ENCODE measurements at regions of chr10 and their contacts with region 1.

Region 1: DNA sequence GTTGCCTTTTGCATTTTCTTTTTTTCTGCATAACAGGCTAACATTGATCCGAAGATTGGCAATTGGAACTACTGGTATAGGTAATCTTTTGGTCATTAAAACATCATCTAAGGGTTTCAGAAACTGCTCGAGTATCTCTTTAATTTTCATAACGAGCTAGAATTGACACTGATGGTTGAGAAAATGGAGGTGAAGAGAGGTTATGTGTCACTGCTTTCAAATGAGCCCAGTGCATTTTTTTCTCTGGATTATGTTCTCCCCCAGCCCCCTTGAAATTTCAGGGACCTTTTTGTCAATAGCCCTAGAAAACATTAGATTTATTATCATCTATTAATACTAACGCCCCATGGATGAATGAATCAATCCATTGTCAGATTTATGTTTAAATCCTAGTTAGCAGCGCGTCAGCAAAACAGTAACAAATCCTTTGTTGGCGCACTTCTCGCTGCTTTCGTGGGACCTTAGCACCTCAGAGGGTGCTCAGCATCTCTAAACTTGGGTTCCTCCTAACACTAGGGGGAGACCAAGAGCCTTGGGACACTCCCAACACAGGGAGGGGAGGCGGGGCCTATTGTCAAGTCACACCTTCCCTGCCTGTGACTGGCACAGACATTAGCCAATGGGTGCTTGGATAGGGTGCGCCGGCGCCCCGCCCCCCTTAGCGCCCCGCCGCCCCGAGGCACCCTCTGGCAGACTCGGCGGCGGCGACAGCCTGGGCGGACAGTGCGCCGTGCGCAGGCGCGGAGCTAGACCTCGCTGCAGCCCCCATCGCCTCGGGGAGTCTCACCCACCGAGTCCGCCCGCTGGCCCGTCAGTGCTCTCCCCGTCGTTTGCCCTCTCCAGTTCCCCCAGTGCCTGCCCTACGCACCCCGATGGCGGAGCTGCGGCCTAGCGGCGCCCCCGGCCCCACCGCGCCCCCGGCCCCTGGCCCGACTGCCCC is at the start of gene SUFU:
- H3K4me3 Mint-ChIP-seq: peak within 1 kb of the TSS; percentile 98
- H3K27ac Mint-ChIP-seq: peak within 1 kb of the TSS; percentile 97
- H3K4me1 Mint-ChIP-seq: peaks cover 34% of the 10 kb centered on the region
- H3K27me3 Mint-ChIP-seq: no peaks in the 10 kb centered on the region

Region 2: GRCh38 chr10:102151774-102152544 is 351.6 kb before region 1 on chr10 and contains the start of gene NOLC1:
- intact Hi-C with region 1: loop called (anchors 5 kb)
- H3K4me3 Mint-ChIP-seq: peak within 1 kb of the TSS; percentile 91
- H3K27ac Mint-ChIP-seq: peak within 1 kb of the TSS; percentile 91
- H3K4me1 Mint-ChIP-seq: peaks cover 30% of the 10 kb centered on the region
- H3K27me3 Mint-ChIP-seq: no peaks in the 10 kb centered on the region

Region 3: GRCh38 chr10:102208311-102209035 is 295.1 kb before region 1 on chr10:
- intact Hi-C with region 1: no loop called
- H3K4me3 Mint-ChIP-seq: no peak overlapping the region
- H3K27ac Mint-ChIP-seq: no peak overlapping the region
- H3K4me1 Mint-ChIP-seq: peaks cover 3% of the 10 kb centered on the region
- H3K27me3 Mint-ChIP-seq: no peaks in the 10 kb centered on the region

Region 4: GRCh38 chr10:102245101-102245931 is 258.2 kb before region 1 on chr10 and contains the start of gene GBF1:
- intact Hi-C with region 1: loop called (anchors 10 kb)
- H3K4me3 Mint-ChIP-seq: peak within 1 kb of the TSS; percentile 92
- H3K27ac Mint-ChIP-seq: peak within 1 kb of the TSS; percentile 89
- H3K4me1 Mint-ChIP-seq: peaks cover 46% of the 10 kb centered on the region
- H3K27me3 Mint-ChIP-seq: peaks cover 27% of the 10 kb centered on the region

Region 5: DNA sequence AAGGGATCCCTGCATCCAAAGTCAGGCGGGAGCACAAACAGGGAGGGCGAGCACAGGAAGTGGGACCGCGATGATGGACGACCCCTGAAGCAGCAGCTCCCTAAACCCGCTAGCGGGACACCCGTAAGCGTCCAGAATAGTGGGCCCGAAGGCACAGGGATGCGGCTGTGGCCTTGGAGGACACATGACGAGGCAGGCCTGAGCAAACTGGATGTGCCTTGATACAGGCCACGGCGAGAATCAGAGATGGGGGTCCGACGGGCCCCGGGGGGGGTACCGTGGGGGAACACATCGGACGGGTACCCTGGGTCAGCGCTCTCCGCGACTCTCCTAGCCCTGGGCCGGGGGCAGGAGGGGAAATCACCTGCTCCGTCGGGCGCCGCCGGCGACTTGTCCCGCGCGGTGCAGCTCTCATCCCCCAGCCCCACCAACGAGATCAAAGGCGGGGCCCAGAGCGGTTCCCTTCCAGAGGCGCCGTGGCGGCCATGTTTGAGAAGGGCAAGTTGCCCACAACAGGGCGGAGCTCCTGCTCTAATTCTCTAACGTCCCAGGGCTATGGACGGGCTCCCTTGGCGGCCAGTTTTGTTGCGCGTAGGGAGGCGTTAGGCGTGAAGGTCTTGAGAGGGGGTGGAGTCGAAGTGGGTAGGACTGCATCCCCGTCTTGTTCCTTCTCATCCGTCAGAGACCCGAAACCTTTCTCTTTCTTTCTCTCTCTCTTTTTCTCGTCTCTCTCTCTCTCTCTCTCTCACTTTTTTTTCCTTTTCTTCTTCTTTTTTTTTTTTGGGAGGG is 71.2 kb before region 1 on chr10 and contains the start of gene CUEDC2:
- intact Hi-C with region 1: loop called (anchors 2 kb)
- H3K4me3 Mint-ChIP-seq: peak within 1 kb of the TSS; percentile 92
- H3K27ac Mint-ChIP-seq: peak within 1 kb of the TSS; percentile 87
- H3K4me1 Mint-ChIP-seq: peaks cover 57% of the 10 kb centered on the region
- H3K27me3 Mint-ChIP-seq: no peaks in the 10 kb centered on the region

Region 6: DNA sequence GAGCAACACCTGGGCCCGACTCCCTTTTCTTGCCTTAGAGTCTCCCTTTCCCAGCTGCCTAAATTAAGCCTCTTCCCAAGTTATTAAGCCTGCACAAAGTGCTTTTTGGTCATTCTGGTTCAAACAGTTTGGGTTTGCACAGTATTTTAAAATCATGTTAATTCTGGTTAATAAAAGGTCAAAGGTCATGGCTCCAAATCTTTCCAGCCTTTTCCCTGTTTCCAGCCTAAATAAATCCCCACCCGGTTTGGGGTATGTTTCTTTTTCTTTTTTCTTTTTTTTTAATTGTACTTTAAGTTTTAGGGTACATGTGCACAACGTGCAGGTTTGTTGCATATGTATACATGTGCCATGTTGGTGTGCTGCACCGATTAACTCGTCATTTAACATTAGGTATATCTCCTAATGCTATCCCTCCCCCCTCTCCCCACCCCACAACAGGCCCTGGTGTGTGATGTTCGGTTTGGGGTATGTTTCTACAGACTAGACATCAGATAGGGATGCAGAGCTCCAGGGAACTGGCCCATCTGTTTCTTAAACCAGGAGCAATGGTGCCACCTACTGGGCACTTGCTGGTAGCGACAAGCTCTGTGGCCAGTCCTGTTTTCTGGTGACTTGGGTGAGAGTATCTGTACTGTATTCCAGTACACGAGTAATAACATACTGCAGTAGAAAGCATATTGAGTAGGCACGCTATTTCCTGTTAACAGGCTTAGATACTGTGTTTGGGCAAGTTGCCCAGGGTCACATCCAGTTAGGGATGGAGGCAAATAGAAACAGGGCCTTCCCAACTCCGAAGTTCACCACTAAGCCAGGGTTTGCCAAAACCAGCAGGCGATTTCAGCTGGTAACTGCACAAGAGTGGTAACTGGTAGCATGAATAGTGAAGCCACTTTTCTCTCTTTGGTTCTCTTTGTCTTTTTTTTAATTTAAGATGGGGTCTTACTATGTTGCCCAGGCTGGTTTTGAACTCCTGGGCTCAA is 80.2 kb after region 1 on chr10:
- intact Hi-C with region 1: loop called (anchors 1 kb)
- H3K4me3 Mint-ChIP-seq: no peak overlapping the region
- H3K27ac Mint-ChIP-seq: no peak overlapping the region
- H3K4me1 Mint-ChIP-seq: peaks cover 34% of the 10 kb centered on the region
- H3K27me3 Mint-ChIP-seq: no peaks in the 10 kb centered on the region

Region 7: GRCh38 chr10:102641880-102642735 is 138.6 kb after region 1 on chr10:
- intact Hi-C with region 1: loop called (anchors 2 kb)
- H3K4me3 Mint-ChIP-seq: peak overlapping the region; percentile 91
- H3K27ac Mint-ChIP-seq: peak overlapping the region; percentile 99
- H3K4me1 Mint-ChIP-seq: peaks cover 27% of the 10 kb centered on the region
- H3K27me3 Mint-ChIP-seq: peaks cover 1% of the 10 kb centered on the region